Thyroid gland (tissue), 4 donors: ENCODE measurements at regions of chr2 and their contacts with region 1.

Region 1: GRCh38 chr2:204545023-204545860 is at the start of gene PARD3B:
- DNase-seq: peak; percentile 73 to 74
- H3K4me3 ChIP-seq: peak within 1 kb of the TSS; percentile 32 to 83 (median 75)
- H3K27ac ChIP-seq: peak within 1 kb of the TSS; percentile 85 to 94 (median 94)
- H3K4me1 ChIP-seq: peaks cover 16 to 17% of the 10 kb centered on the region in 2 donors
- H3K27me3 ChIP-seq: no peaks in the 10 kb centered on the region
- CTCF ChIP-seq: peak in 1 of 6 experiments; percentile 4
- POLR2A ChIP-seq: peak in 1 of 2 donors; percentile 63
- total RNA-seq, gene PARD3B: 27.0 to 43.4 (median 34.6) TPM

Region 2: DNA sequence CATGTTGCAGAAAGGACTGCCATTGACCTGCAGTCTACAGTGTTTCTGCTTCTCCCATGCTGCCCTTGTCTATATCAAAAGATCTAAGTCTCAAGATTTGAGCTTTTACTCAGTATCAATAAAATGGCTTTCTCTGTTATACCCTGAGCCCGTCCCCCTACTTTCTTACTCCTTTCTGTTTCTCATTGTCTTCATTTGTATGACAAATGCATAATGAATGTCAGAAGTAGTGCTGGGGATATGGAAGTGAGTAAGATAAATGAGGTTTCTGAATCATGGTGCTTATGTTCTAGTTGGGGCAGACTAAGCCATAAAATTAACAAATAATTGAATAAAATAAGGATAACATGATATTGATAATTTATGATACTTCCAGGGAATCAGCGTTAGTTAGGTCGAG is 128.6 kb after region 1 on chr2:
- intact Hi-C with region 1: loop called (anchors 10 kb)
- DNase-seq: no peak
- H3K4me3 ChIP-seq: no peak overlapping the region
- H3K27ac ChIP-seq: no peak overlapping the region
- H3K4me1 ChIP-seq: peaks cover 0 to 7% of the 10 kb centered on the region in 2 donors
- H3K27me3 ChIP-seq: no peaks in the 10 kb centered on the region
- CTCF ChIP-seq: no peak
- POLR2A ChIP-seq: no peak

Region 3: GRCh38 chr2:204691911-204692510 is 146.8 kb after region 1 on chr2:
- intact Hi-C with region 1: no loop called
- DNase-seq: peak; percentile 48 to 58
- H3K4me3 ChIP-seq: no peak overlapping the region
- H3K27ac ChIP-seq: no peak overlapping the region
- H3K4me1 ChIP-seq: no peaks in the 10 kb centered on the region
- H3K27me3 ChIP-seq: no peaks in the 10 kb centered on the region
- CTCF ChIP-seq: peak in 5 of 6 experiments; percentile 60 to 79 (median 75)
- POLR2A ChIP-seq: no peak